H1 (cell line): ENCODE measurements at regions of chr12 and their contacts with region 1.

Region 1: DNA sequence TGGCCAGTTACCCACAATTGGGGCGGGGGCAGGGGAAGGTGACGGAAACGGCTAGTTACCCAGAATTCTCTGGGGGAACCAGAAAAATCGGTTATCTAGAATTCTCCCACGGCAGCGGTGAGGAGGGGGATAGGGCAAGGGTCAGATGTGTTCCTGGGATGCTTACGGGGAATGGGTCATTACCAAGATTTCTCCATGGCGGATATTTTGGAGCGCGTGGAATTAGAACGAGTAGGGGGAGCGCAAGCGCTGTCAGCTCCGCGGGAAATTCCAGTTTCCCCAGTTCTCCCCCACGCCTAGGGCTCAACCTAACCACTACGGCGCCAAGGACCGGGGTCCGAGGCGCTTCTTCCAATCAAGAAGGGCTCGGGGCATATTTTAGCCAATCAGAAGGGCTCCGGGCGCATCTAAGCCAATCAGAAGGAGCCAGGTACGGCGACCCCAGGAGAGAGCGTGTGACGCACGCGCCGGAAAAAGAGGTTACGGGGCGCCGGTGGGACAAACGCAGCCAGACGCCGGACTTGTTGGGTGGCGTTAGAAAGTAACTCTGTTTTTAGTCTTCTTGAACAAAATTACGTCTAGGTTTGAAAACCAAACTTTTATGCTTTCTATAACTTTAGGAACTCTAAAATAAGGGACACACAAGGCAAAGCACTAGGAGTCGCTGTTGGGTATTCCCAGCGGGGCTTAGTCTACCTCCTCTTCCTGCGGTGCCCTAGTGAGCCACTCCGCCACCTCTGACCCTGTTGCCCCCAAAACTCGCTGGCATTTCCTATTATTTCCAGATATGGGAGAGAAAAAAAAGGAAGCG is at the start of gene PAN2:
- DNase-seq: peak; percentile 67 to 92
- H3K4me3 ChIP-seq: peak within 1 kb of the TSS; percentile 53 to 73 (median 62)
- H3K27ac ChIP-seq: peak within 1 kb of the TSS; percentile 81; the same call in 1 of the 2 replicates
- H3K4me1 ChIP-seq: peaks cover 9 to 23% (median 13%) of the 10 kb centered on the region in 4 experiments
- H3K27me3 ChIP-seq: no peaks in the 10 kb centered on the region
- CTCF ChIP-seq: peak; percentile 23 to 58 (median 28); a peak in 3 of 4 replicates
- EP300 ChIP-seq: peak in 1 of 2 experiments; percentile 48; a peak in 1 of 3 replicates
- POLR2A ChIP-seq: peak; percentile 35 to 82
- RAD21 ChIP-seq: peak in 1 of 2 experiments; percentile 13; a peak in 1 of 4 replicates
- total RNA-seq, gene PAN2: 30.5 and 36.7 TPM in 2 replicates

Region 2: GRCh38 chr12:56346703-56347102 is 12.8 kb after region 1 on chr12:
- CTCF ChIA-PET with region 1: interaction called, 12 read pairs
- POLR2A ChIA-PET with region 1: interaction called, 20 read pairs
- DNase-seq: peak in 1 of 2 experiments; percentile 63
- H3K4me3 ChIP-seq: no peak overlapping the region
- H3K27ac ChIP-seq: no peak overlapping the region
- H3K4me1 ChIP-seq: no peaks in the 10 kb centered on the region
- H3K27me3 ChIP-seq: no peaks in the 10 kb centered on the region
- CTCF ChIP-seq: peak; percentile 38 to 56 (median 46)
- EP300 ChIP-seq: no peak
- POLR2A ChIP-seq: no peak
- RAD21 ChIP-seq: peak; percentile 52 to 61

Region 3: GRCh38 chr12:56359851-56360767 is 26.2 kb after region 1 on chr12 and contains the start of gene STAT2:
- CTCF ChIA-PET with region 1: interaction called, 10 read pairs
- POLR2A ChIA-PET with region 1: interaction called, 55 read pairs
- DNase-seq: peak; percentile 98 to 99
- H3K4me3 ChIP-seq: peak within 1 kb of the TSS; percentile 78 to 88 (median 84)
- H3K27ac ChIP-seq: peak within 1 kb of the TSS; percentile 70
- H3K4me1 ChIP-seq: peaks cover 0 to 5% (median 2%) of the 10 kb centered on the region in 4 experiments; a peak in 4 of 7 replicates
- H3K27me3 ChIP-seq: peaks cover 0 to 3% (median 0%) of the 10 kb centered on the region in 4 experiments; a peak in 1 of 7 replicates
- CTCF ChIP-seq: no peak
- EP300 ChIP-seq: peak; percentile 65 to 71; a peak in 2 of 3 replicates
- POLR2A ChIP-seq: peak in 1 of 2 experiments; percentile 56; a peak in 2 of 3 replicates
- RAD21 ChIP-seq: no peak
- total RNA-seq, gene STAT2: 42.4 and 44.7 TPM in 2 replicates

Region 4: DNA sequence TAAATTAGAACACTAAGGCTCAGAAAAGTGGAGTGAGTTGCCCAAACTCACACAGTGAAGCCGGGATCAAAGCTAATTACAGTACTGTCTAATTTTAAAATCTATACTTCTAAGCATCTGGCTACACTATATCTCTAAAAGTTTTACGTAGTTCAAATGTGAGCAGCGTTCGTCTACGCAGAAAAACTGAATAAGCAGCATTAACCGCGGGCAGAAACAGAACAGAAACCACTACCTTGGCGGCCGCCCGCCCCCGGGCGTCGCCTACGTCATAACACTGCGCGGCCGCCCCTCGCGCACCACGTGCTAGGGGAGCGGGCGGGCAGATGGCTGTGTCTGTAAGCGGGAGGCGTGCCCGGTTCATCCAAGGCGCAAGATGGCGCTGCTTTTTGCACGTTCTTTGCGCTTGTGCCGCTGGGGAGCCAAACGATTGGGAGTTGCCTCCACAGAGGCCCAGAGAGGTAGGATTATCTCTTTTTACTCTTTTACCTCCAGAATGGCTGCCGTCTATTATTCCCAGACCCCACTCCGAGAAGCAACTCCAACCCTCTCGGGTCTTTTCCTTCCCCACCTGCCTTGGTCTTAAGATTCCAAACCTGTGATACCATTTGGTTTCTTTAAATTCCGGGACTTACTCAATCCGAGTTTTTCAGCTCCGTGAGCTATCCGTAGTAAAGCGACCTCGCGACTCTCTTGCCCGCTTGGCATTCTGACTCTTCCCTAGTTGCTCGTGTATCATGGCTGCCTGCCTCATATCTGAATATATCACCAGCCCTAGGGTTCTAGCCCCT is 134.5 kb after region 1 on chr12 and contains the start of gene SPRYD4:
- CTCF ChIA-PET with region 1: interaction called, 13 read pairs
- POLR2A ChIA-PET with region 1: interaction called, 3 read pairs
- DNase-seq: peak; percentile 59 to 90
- H3K4me3 ChIP-seq: peak within 1 kb of the TSS; percentile 80 to 99 (median 87)
- H3K27ac ChIP-seq: peak within 1 kb of the TSS; percentile 90
- H3K4me1 ChIP-seq: peaks cover 3 to 6% (median 5%) of the 10 kb centered on the region in 4 experiments
- H3K27me3 ChIP-seq: no peaks in the 10 kb centered on the region
- CTCF ChIP-seq: peak; percentile 19 to 34 (median 21); a peak in 3 of 4 replicates
- EP300 ChIP-seq: 0 out of 3 replicates have a peak, but pooled peaks of 1 of the 2 experiments have one; percentile 13
- POLR2A ChIP-seq: peak; percentile 98
- RAD21 ChIP-seq: no peak; a peak in 1 of 4 replicates
- total RNA-seq, gene SPRYD4: 4.0 and 4.3 TPM in 2 replicates